ENCODE measurements at regions of chr11 and their contacts with region 1.

Region 1: DNA sequence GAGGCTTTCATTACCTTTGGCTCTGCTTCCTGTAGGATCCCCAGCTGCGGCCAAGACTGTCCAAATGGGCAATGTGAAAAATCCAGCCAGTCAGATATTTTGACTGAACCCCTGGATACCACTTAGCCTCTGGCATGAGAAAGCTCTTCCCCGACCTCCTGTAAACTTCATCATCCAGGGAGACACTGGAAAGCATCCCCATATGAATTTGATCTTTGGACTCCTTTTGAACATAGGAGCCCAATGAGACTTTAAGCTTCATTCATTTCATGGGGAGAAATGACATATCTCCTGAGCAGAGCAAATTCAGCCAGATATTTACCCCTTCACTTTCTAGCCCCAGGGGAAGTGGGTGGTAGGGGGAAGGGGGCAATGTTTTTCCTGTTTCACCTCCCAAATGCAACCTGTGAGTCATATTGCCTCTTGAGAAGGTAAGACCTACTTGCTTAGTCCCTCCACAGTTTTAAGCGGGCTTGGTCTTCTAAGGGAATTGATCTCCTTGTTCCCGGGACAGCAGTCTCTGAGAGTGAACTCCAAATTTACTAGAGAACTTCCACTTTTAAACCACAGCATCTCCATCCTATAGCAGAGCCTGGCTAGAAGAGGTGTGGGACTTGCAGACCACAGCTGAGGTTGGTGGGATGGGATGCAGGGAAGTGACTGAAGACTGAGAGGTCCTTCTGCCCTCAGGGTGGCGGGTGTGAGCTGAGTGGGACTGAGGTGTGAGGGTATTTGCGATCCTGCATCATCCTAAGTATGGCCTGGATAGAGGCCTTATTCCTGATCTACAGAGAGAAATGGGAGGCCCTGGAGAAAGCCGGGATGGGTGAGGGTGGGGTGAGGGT is 20.3 kb upstream of the POU2AF1 start:
- DNase-seq: no peak
- ATAC-seq: no peak
- H3K4me3 ChIP-seq: no peak overlapping the region
- H3K27ac ChIP-seq: no peak overlapping the region
- H3K4me1 ChIP-seq: no peaks in the 10 kb centered on the region
- H3K27me3 ChIP-seq: no peaks in the 10 kb centered on the region
- CTCF ChIP-seq: no peak
- POLR2A ChIP-seq: no peak

Region 2: DNA sequence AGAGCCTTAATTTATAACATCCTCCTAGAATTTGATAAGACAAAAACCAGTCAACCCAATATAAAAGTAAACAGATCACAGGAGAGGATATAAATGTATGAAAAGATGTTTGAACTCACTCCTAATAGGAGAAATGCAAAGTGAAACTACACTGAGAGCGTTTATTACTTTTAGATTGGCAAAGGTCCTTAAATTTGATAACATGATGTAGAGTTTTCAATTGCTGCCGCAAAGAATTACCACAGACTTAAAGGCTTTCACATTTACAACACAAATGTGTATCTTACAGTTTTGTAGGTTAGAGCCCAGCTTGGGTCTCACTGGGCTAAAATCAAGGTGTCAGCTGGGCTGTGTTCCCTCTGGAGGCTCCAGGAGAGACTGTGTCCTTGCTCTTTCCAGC is 163.0 kb before region 1 on chr11:
- intact Hi-C with region 1: no loop called
- DNase-seq: no peak
- ATAC-seq: no peak
- H3K4me3 ChIP-seq: no peak overlapping the region
- H3K27ac ChIP-seq: no peak overlapping the region
- H3K4me1 ChIP-seq: no peaks in the 10 kb centered on the region
- H3K27me3 ChIP-seq: peaks cover 0 to 12% (median 3%) of the 10 kb centered on the region in 9 donors
- CTCF ChIP-seq: no peak
- POLR2A ChIP-seq: no peak

Region 3: GRCh38 chr11:111336582-111337256 is 62.7 kb before region 1 on chr11:
- intact Hi-C with region 1: no loop called
- DNase-seq: no peak
- ATAC-seq: peak in 2 of 4 donors; percentile 36 to 47
- H3K4me3 ChIP-seq: no peak overlapping the region
- H3K27ac ChIP-seq: no peak overlapping the region
- H3K4me1 ChIP-seq: peaks cover 0 to 15% (median 0%) of the 10 kb centered on the region in 12 donors
- H3K27me3 ChIP-seq: no peaks in the 10 kb centered on the region
- CTCF ChIP-seq: no peak
- POLR2A ChIP-seq: no peak

Region 4: DNA sequence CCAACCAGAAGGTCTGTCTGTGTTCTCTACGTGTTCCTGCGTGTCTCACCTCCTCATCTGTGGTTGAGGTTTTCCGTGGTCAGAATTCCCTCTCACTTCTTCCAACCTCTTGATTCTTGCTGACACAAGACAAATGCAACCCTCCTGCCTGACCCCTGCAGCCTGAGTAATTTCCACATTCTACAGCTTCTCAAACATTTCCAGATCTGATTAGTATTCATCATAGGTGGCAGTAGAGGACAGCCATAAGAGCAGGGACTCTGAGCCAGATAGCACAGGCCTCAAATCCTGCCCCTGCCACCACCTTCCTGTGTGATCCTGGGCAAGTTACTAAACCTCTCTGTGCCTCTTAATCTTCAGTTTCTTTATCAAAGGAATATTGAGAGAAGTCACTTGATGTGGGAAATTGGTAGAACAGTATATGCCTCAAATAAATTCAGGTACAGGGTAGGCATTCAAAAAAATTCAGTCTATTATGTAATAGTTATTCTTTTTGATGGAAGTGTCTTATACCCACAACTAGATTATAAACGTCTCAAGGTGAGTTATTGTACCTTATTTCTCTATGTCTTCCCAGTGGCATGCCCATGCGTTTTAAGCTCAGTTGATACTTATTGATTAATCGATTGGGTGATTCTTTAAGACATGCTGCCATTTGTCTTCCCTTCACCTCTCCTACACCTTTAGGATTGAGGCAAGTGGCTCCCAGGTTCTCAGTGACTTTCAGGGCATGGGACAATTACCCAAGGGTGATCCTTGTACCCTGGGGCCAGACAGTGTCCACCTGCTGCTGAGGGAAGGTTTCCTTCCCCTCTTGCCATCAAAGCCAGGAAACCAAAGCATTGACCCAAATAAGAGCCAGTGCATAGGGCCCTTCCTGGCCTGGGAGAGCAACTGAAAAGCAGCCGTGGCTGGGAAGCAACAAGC is 39.9 kb before region 1 on chr11:
- intact Hi-C with region 1: loop called in 1 of 10 experiments (anchors 5 kb)
- DNase-seq: no peak
- ATAC-seq: no peak
- H3K4me3 ChIP-seq: no peak overlapping the region
- H3K27ac ChIP-seq: no peak overlapping the region
- H3K4me1 ChIP-seq: no peaks in the 10 kb centered on the region
- H3K27me3 ChIP-seq: no peaks in the 10 kb centered on the region
- CTCF ChIP-seq: no peak
- POLR2A ChIP-seq: no peak

Measured in heart left ventricle (tissue), 16 donors.